ENCODE measurements at regions of chr12 and their contacts with region 1.

Region 1: GRCh38 chr12:124453419-124454351 is 113.7 kb downstream of the NCOR2 start:
- DNase-seq: peak; percentile 96

Region 2: GRCh38 chr12:124428130-124428791 is 25.4 kb before region 1 on chr12:
- intact Hi-C with region 1: no loop called
- DNase-seq: peak; percentile 93

Region 3: GRCh38 chr12:124441443-124442194 is 12.1 kb before region 1 on chr12:
- intact Hi-C with region 1: loop called in 1 of 2 experiments (anchors 2 kb)
- DNase-seq: no peak

Region 4: DNA sequence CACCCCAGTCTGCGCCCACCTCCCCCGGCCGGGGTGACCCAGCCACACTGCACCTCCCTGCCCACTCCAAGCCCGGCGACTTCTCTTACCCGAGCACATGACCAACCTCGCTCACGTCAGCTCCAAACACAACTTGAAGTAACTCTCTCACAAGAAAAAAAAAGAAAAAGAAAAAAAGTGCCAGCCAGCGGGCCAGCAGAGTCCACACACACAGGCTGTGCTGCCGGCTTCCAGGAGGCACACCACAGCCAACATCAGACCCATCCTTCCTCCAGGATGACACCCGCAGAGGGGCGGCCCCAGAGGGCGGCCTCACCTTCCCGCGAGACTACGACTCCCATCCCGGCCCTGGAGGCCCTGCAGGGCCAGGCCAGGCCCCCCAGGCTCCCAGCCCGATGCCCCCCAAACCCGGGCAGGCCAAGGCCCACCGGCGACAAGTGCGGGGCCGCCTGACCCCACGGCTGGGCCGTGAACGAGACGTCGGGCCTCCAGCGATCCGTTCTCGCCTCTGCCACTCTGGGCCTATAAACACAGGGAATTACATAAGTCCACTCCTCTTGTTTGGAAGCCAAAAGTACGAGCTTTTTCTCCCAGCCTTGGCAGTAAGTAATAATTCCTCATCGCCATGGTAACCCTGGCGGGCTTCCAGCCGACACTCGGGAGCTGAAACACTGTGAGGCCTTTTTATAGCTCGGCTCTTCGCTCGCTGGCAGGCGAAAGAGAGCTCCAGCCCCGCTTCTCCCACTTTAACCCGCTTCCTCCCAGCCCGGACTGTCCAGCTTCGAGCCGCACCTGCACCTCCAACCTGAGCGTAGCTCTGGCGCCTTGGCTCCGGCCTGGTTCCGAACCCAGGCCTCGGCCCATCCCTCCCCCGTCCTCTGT is 64.6 kb after region 1 on chr12:
- intact Hi-C with region 1: loop called in 1 of 2 experiments (anchors 5 kb)
- DNase-seq: peak; percentile 99